ENCODE measurements at regions of chr17 and their contacts with region 1.

Region 1: DNA sequence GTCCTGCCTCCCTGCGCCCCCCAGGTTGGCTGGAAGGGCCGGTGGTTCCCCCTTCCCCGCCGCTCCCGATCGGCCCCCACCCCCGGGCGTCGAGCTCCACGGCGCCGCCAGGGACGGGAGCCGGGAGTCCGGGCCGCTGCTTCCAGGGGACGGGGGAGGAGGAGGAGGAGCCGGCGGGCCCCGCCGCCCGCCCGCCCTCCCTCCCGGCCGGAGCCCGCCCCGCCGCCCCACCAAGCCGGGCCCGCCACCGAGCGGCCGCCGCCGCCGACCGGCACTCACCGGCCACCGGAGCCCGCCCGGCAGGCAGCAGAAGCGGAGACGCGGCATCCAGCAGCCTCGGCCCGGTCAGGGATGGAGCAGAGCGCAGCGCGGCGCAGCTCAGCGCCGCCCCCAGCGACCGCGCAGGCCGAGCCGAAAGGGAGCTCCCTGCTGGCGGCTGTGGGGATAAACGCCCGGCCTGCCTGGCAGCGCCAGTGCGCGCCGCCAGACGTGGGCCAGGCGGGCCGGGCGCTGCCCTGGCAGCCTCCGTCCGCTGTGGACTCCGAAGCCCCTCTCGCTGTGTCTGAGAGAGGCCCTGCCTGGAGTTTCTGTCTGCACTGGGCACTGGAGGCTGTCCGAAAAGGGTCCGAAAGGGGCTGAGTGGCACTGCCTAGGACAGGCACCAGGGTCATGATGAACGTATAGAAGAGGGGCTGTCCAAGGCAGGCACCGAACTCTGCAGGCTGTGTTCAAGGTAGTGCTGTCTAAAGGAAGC is at the start of gene MYO18A:
- DNase-seq: peak; percentile 85
- ATAC-seq: peak; percentile 63
- H3K4me3 Mint-ChIP-seq: peak within 1 kb of the TSS; percentile 81
- H3K27ac Mint-ChIP-seq: peak within 1 kb of the TSS; percentile 93
- H3K4me1 Mint-ChIP-seq: peaks cover 32% of the 10 kb centered on the region
- H3K27me3 Mint-ChIP-seq: peaks cover 18% of the 10 kb centered on the region
- CTCF ChIP-seq: peak; percentile 74
- total RNA-seq, gene MYO18A: 38.5 to 54.9 TPM (median 42.5 TPM) in 3 replicates

Region 2: GRCh38 chr17:29124117-29124924 is 55.9 kb before region 1 on chr17:
- CTCF ChIA-PET with region 1: interaction called, 68 read pairs
- POLR2A ChIA-PET with region 1: no interaction called
- DNase-seq: peak; percentile 51
- ATAC-seq: peak; percentile 87
- H3K4me3 Mint-ChIP-seq: no peak overlapping the region
- H3K27ac Mint-ChIP-seq: no peak overlapping the region
- H3K4me1 Mint-ChIP-seq: peaks cover 3% of the 10 kb centered on the region; the same call in 1 of the 2 replicates
- H3K27me3 Mint-ChIP-seq: no peaks in the 10 kb centered on the region
- CTCF ChIP-seq: no peak

Region 3: DNA sequence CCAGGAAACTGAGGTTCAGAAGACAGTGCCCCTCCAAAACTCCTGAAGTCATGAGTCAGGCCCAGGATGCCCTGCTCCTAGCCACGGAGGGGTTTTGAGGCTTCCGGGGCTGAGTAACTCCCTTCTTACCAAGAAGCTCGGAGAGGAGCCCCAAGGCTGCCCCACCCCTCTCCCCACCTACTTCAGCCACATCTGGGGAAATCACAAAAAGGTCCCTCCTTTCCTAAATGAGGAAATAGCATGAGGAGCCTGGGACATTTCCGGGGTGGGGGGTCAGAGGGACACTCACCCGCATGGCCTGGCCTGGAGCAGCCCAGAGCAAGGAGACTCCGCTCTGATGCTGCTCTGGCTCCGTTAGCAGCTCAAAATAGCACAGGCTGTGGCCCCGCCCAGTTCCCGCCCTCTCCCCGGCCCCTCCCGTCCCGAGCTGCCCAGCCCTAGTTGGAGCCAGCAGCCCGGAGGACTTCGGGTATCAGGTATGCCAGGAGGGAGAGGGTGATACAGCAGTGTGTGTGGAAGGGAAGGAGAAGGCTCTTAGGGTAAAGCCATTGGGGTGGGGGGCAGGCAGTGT is 40.1 kb before region 1 on chr17:
- CTCF ChIA-PET with region 1: interaction called, 464 read pairs
- POLR2A ChIA-PET with region 1: interaction called, 3 read pairs
- DNase-seq: peak; percentile 83
- ATAC-seq: peak; percentile 88
- H3K4me3 Mint-ChIP-seq: no peak overlapping the region
- H3K27ac Mint-ChIP-seq: peak overlapping the region; percentile 69; the same call in 1 of the 2 replicates
- H3K4me1 Mint-ChIP-seq: peaks cover 34% of the 10 kb centered on the region
- H3K27me3 Mint-ChIP-seq: no peaks in the 10 kb centered on the region
- CTCF ChIP-seq: no peak

Region 4: GRCh38 chr17:29168079-29168758 is 12.0 kb before region 1 on chr17:
- CTCF ChIA-PET with region 1: interaction called, 22 read pairs
- POLR2A ChIA-PET with region 1: no interaction called
- DNase-seq: no peak
- ATAC-seq: no peak
- H3K4me3 Mint-ChIP-seq: no peak overlapping the region
- H3K27ac Mint-ChIP-seq: peak overlapping the region; percentile 84
- H3K4me1 Mint-ChIP-seq: peaks cover 12% of the 10 kb centered on the region
- H3K27me3 Mint-ChIP-seq: no peaks in the 10 kb centered on the region
- CTCF ChIP-seq: no peak

Region 5: DNA sequence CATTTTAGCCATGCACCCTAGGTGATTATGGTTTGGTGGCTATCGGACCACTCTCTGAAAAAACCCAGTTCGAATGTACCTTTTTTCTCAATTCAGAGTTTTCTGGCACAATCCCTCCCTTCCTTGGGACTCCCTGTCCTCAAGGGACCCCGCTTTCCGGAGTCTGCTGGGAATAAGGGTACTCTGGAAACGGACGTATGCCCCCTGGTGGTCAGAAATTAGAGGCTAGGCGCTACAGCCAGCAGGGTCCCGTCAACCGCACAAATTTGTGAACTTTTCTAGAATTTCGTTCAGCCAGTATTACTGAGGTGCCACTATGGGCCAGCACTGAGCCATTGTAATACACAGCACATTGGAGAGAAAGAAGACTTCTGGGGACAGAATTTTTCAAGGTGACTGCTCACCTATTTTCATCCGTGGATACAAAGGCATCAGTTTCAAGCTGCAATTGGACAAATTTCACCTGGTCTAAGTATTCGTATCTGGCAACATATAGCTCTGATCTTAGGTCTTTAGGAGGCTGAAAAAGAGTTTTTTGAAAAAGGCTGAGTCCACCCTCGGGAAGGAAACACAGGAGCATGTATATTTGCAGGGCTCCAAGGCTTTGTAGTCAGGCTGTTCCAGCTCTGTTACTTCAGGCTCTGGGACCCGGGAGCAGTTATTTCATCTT is 39.3 kb after region 1 on chr17:
- CTCF ChIA-PET with region 1: interaction called, 66 read pairs
- POLR2A ChIA-PET with region 1: no interaction called
- DNase-seq: peak; percentile 89
- ATAC-seq: peak; percentile 97
- H3K4me3 Mint-ChIP-seq: no peak overlapping the region
- H3K27ac Mint-ChIP-seq: no peak overlapping the region
- H3K4me1 Mint-ChIP-seq: peaks cover 6% of the 10 kb centered on the region
- H3K27me3 Mint-ChIP-seq: no peaks in the 10 kb centered on the region
- CTCF ChIP-seq: peak; percentile 82

Region 6: GRCh38 chr17:29293890-29294579 is 113.8 kb after region 1 on chr17 and contains the start of gene NUFIP2:
- CTCF ChIA-PET with region 1: interaction called, 14 read pairs
- POLR2A ChIA-PET with region 1: interaction called, 4 read pairs
- DNase-seq: peak; percentile 99
- ATAC-seq: peak; percentile 94
- H3K4me3 Mint-ChIP-seq: peak within 1 kb of the TSS; percentile 100
- H3K27ac Mint-ChIP-seq: peak within 1 kb of the TSS; percentile 99
- H3K4me1 Mint-ChIP-seq: peaks cover 32% of the 10 kb centered on the region
- H3K27me3 Mint-ChIP-seq: no peaks in the 10 kb centered on the region
- CTCF ChIP-seq: no peak
- total RNA-seq, gene NUFIP2: 87.1 to 93.1 TPM (median 90.5 TPM) in 3 replicates